ENCODE measurements at regions of chr20 and their contacts with region 1.

Region 1: GRCh38 chr20:49534255-49534712 is 33.7 kb downstream of the PTGIS start:
- DNase-seq: no peak
- H3K4me3 ChIP-seq: no peak overlapping the region
- H3K27ac ChIP-seq: peak overlapping the region in 1 of 2 donors; percentile 0
- H3K4me1 ChIP-seq: no peaks in the 10 kb centered on the region
- H3K27me3 ChIP-seq: no peaks in the 10 kb centered on the region
- CTCF ChIP-seq: peak; percentile 81 to 90 (median 81)

Region 2: GRCh38 chr20:49256261-49256660 is 278.0 kb before region 1 on chr20:
- intact Hi-C with region 1: no loop called
- DNase-seq: no peak
- H3K4me3 ChIP-seq: no peak overlapping the region
- H3K27ac ChIP-seq: no peak overlapping the region
- H3K4me1 ChIP-seq: no peaks in the 10 kb centered on the region
- H3K27me3 ChIP-seq: no peaks in the 10 kb centered on the region
- CTCF ChIP-seq: no peak

Region 3: GRCh38 chr20:49435659-49436058 is 98.6 kb before region 1 on chr20:
- intact Hi-C with region 1: no loop called
- DNase-seq: no peak
- H3K4me3 ChIP-seq: no peak overlapping the region
- H3K27ac ChIP-seq: no peak overlapping the region
- H3K4me1 ChIP-seq: no peaks in the 10 kb centered on the region
- H3K27me3 ChIP-seq: no peaks in the 10 kb centered on the region
- CTCF ChIP-seq: no peak

Region 4: GRCh38 chr20:49508435-49509199 is 25.7 kb before region 1 on chr20:
- intact Hi-C with region 1: loop called (anchors 2 kb)
- DNase-seq: no peak
- H3K4me3 ChIP-seq: no peak overlapping the region
- H3K27ac ChIP-seq: peak overlapping the region; percentile 62 to 70
- H3K4me1 ChIP-seq: peaks cover 12 to 57% of the 10 kb centered on the region in 2 donors
- H3K27me3 ChIP-seq: no peaks in the 10 kb centered on the region
- CTCF ChIP-seq: peak; percentile 51 to 59 (median 52)

Measured in ascending aorta (tissue), 2 donors.